ENCODE measurements at regions of chr1 and their contacts with region 1.

Region 1: GRCh38 chr1:235011599-235012435 is 116.8 kb downstream of the TOMM20 start:
- DNase-seq: peak; percentile 100
- ATAC-seq: peak; percentile 75
- H3K4me3 ChIP-seq: peak overlapping the region; percentile 46; the same call in 1 of the 2 replicates
- H3K27ac ChIP-seq: peak overlapping the region; percentile 99
- H3K4me1 ChIP-seq: peaks cover 86% of the 10 kb centered on the region
- H3K27me3 ChIP-seq: no peaks in the 10 kb centered on the region
- CTCF ChIP-seq: no peak
- EP300 ChIP-seq: peak; percentile 100
- POLR2A ChIP-seq: peak; percentile 81
- RAD21 ChIP-seq: peak; percentile 30

Region 2: DNA sequence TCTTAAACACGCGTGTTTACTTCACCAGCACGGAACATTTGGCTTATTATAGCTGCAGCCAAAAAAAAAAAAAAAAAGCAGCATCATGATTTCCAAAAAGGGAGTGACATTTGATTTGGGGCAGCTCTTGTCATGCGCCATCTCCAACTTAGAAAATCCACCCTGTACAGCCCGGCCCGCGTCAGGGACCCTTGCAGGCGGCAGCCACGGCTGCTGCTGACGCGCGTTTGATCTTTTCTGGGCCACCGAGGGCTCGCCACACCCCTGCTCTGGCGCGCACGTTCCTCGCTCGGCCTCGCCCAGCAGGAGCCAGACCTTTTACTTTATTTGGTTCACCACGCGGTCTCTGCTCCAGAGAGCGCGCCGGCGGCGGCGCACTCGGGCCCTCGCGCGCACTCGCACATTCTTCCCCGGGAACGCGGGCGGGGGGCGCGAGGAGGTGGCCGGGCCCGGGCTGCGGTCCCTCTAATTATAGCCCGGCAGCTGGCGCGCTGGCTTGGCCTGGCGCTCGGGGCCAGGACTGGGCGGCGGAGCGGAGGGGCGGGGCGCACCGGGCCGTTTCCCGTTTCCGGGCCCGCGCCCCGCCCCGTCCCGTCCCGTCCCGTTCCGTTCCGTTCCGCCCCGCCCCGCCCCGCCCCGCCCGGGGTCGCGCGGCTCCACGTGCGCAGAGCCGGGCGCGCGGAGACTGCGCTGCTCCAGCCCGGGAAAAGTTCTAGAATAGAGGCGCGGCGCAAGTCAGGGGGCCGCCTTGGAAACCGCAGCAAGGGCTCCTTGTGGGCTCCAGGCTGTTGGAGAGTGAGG is 412.0 kb before region 1 on chr1:
- CTCF ChIA-PET with region 1: interaction called, 3 read pairs
- POLR2A ChIA-PET with region 1: interaction called, 3 read pairs
- RAD21 ChIA-PET with region 1: interaction called, 21 read pairs
- SMC1A ChIA-PET with region 1: interaction called, 6 read pairs
- in situ Hi-C with region 1: no loop called
- intact Hi-C with region 1: no loop called
- DNase-seq: no peak
- ATAC-seq: peak; percentile 76
- H3K4me3 ChIP-seq: peak overlapping the region; percentile 67; the same call in 1 of the 2 replicates
- H3K27ac ChIP-seq: peak overlapping the region; percentile 75
- H3K4me1 ChIP-seq: peaks cover 22% of the 10 kb centered on the region
- H3K27me3 ChIP-seq: no peaks in the 10 kb centered on the region
- CTCF ChIP-seq: 0 out of 6 replicates have a peak, but pooled peaks of 1 of the 3 experiments have one; percentile 5
- EP300 ChIP-seq: 0 out of 4 replicates have a peak, but pooled peaks of 1 of the 2 experiments have one; percentile 42
- POLR2A ChIP-seq: peak; percentile 70; the same call in 1 of the 2 replicates
- RAD21 ChIP-seq: no peak

Region 3: GRCh38 chr1:234772345-234773147 is 239.3 kb before region 1 on chr1:
- CTCF ChIA-PET with region 1: no interaction called
- POLR2A ChIA-PET with region 1: interaction called, 6 read pairs
- RAD21 ChIA-PET with region 1: interaction called, 9 read pairs
- SMC1A ChIA-PET with region 1: interaction called, 4 read pairs
- in situ Hi-C with region 1: no loop called
- intact Hi-C with region 1: loop called (anchors 1 kb)
- DNase-seq: peak; percentile 97
- ATAC-seq: peak; percentile 92
- H3K4me3 ChIP-seq: peak overlapping the region; percentile 13; the same call in 1 of the 2 replicates
- H3K27ac ChIP-seq: peak overlapping the region; percentile 89
- H3K4me1 ChIP-seq: peaks cover 37% of the 10 kb centered on the region
- H3K27me3 ChIP-seq: peaks cover 6 to 11% of the 10 kb centered on the region in 2 experiments; a peak in 3 of 4 replicates
- CTCF ChIP-seq: no peak
- EP300 ChIP-seq: peak; percentile 88 to 93; a peak in 3 of 4 replicates
- POLR2A ChIP-seq: peak; percentile 77
- RAD21 ChIP-seq: 0 out of 2 replicates have a peak, but pooled peaks have one; percentile 13

Region 4: DNA sequence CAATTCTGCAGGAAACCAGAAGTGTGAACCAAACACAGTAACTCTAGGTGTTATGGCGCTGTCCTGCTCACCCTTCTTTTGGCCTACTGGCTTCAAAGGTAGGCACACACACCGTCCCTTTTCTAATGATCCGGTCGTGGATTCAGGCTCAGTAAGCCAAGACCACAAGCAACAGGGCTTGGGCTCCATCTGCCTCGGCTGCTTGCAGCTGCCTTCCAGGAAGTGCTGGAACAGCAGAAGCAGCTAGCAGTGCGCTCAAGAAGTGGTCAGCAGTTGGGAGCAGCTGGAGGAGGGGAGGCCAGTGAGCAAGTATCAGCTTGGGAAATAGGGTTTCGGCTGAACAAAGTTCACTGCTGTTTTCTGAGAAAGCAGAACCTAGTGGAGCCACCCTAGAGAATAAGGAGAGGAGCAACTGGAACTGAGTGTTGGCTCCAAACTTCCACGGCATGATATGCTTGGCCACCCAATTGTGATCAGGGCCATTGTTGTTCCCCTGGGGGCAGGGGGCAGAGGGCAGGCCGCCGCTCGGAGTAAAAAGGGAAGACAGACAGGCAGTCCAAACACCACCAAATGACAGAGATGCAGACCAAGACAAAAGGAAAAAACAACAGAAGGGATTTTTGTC is 56.6 kb before region 1 on chr1:
- CTCF ChIA-PET with region 1: no interaction called
- POLR2A ChIA-PET with region 1: interaction called, 4 read pairs
- RAD21 ChIA-PET with region 1: interaction called, 12 read pairs
- SMC1A ChIA-PET with region 1: interaction called, 6 read pairs
- in situ Hi-C with region 1: no loop called
- intact Hi-C with region 1: loop called (anchors 2 kb)
- DNase-seq: no peak
- ATAC-seq: peak; percentile 63
- H3K4me3 ChIP-seq: no peak overlapping the region; the same call in 1 of the 2 replicates
- H3K27ac ChIP-seq: peak overlapping the region; percentile 93
- H3K4me1 ChIP-seq: peaks cover 48% of the 10 kb centered on the region
- H3K27me3 ChIP-seq: no peaks in the 10 kb centered on the region
- CTCF ChIP-seq: no peak
- EP300 ChIP-seq: peak in 1 of 2 experiments; percentile 33; a peak in 1 of 4 replicates
- POLR2A ChIP-seq: 0 out of 2 replicates have a peak, but pooled peaks have one; percentile 43
- RAD21 ChIP-seq: no peak

Region 5: DNA sequence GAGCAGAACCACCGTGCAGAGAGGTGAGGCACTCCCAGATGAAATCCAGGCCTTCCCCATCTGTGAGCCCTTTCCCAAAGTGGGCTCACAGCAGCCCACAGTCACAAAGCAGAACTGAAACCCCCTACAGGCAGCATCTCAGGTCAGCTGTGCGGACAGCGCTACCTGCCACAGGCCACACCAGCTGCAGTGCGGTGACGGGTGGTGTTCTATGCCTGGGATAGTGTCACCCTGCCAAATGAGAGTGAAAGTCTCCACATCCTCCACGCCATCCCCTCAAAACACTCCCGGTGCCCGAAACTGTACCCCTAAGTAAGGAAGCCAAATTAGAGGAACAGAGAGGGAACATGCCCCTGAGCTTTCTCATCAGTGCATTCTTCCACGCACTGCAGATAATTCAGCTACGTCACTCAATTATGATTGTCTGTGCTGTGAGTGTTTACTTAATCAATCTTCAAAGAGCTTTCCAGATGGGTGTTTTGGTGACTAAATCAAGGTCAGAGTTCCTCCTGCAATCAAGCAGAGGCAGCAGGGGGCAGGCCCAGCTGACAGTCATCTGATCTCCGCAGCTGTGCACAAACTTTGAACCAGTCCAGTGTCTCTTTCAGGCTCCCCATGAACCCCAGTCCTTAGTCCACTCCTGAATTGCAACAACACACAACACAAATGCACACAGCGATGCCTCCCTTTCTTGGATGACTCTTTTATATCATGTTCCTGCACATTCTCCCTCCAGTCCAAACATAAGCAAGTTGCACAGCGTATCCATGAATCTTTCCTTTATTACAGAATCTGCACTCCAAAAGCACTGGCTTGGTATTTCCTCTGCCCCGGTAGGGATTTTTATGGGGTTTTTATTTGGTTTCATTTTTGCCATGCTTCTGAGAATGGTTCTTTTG is 33.2 kb before region 1 on chr1:
- CTCF ChIA-PET with region 1: interaction called, 8 read pairs
- POLR2A ChIA-PET with region 1: interaction called, 111 read pairs
- RAD21 ChIA-PET with region 1: interaction called, 257 read pairs
- SMC1A ChIA-PET with region 1: interaction called, 229 read pairs
- in situ Hi-C with region 1: loop called (anchors 5 kb)
- intact Hi-C with region 1: loop called (anchors 1 kb)
- DNase-seq: peak; percentile 94
- ATAC-seq: peak; percentile 66
- H3K4me3 ChIP-seq: peak overlapping the region; percentile 29
- H3K27ac ChIP-seq: peak overlapping the region; percentile 98
- H3K4me1 ChIP-seq: peaks cover 76% of the 10 kb centered on the region
- H3K27me3 ChIP-seq: no peaks in the 10 kb centered on the region
- CTCF ChIP-seq: peak in 2 of 3 experiments; percentile 13 to 16; a peak in 2 of 6 replicates
- EP300 ChIP-seq: peak; percentile 96 to 99
- POLR2A ChIP-seq: 0 out of 2 replicates have a peak, but pooled peaks have one; percentile 56
- RAD21 ChIP-seq: peak; percentile 44

Region 6: GRCh38 chr1:235045034-235045720 is 33.4 kb after region 1 on chr1:
- CTCF ChIA-PET with region 1: interaction called, 5 read pairs
- POLR2A ChIA-PET with region 1: interaction called, 17 read pairs
- RAD21 ChIA-PET with region 1: interaction called, 49 read pairs
- SMC1A ChIA-PET with region 1: interaction called, 125 read pairs
- in situ Hi-C with region 1: no loop called
- intact Hi-C with region 1: loop called (anchors 1 kb)
- DNase-seq: no peak
- ATAC-seq: no peak
- H3K4me3 ChIP-seq: no peak overlapping the region
- H3K27ac ChIP-seq: peak overlapping the region; percentile 40; the same call in 1 of the 2 replicates
- H3K4me1 ChIP-seq: peaks cover 42% of the 10 kb centered on the region
- H3K27me3 ChIP-seq: no peaks in the 10 kb centered on the region
- CTCF ChIP-seq: no peak
- EP300 ChIP-seq: no peak
- POLR2A ChIP-seq: no peak
- RAD21 ChIP-seq: no peak

Region 7: GRCh38 chr1:235199441-235199840 is 187.6 kb after region 1 on chr1:
- CTCF ChIA-PET with region 1: no interaction called
- POLR2A ChIA-PET with region 1: no interaction called
- RAD21 ChIA-PET with region 1: no interaction called
- SMC1A ChIA-PET with region 1: no interaction called
- in situ Hi-C with region 1: no loop called
- intact Hi-C with region 1: no loop called
- DNase-seq: no peak
- ATAC-seq: peak; percentile 67
- H3K4me3 ChIP-seq: no peak overlapping the region
- H3K27ac ChIP-seq: no peak overlapping the region
- H3K4me1 ChIP-seq: no peaks in the 10 kb centered on the region
- H3K27me3 ChIP-seq: no peaks in the 10 kb centered on the region
- CTCF ChIP-seq: peak in 2 of 3 experiments; percentile 24; a peak in 2 of 6 replicates
- EP300 ChIP-seq: no peak
- POLR2A ChIP-seq: no peak
- RAD21 ChIP-seq: no peak

Measured in GM12878 (cell line).